GM10248 (cell line): ENCODE measurements at regions of chr9 and their contacts with region 1.

Region 1: GRCh38 chr9:133375724-133376654 is at the starts of genes STKLD1 and SURF4:
- DNase-seq: peak; percentile 100
- CTCF ChIP-seq: no peak

Region 2: DNA sequence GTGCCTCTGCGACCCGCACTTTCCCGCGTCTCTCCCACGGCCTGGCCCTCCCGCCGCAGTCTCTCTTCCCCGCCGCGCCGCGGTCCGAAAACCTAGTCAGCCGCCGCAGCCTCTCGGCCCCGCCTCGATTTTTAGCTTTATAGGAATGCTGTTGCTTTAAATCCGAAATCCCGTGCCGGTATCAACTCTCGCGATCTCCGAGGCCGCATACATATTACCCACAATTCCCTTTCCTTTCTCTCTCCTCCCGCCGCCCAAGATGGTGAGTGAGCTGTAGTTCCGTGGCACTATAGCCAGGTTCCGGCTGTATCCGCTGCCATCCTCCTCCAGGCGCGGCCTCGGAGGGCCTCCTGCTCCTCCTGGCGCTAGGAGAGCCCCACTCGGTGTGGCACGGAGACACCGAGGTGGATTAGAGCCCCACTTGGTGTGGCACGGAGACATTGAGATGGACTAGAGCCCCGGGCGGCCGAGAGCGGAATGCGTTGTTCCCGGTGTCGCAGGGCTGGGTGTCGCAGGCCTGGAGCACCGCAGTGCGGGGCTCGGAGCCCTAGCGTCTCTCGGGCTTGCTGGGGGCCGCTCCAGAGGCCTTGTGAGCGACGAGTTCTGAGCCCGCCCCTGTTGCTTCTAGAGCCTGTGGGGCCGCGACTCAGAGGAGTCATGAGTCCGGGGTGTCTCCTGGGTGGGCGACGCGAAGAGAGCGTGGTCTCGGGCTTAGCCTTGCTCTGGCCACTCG is 27.8 kb before region 1 on chr9 and contains the starts of genes MED22 and RPL7A:
- CTCF ChIA-PET with region 1: interaction called, 10 read pairs
- POLR2A ChIA-PET with region 1: interaction called, 21 read pairs
- DNase-seq: peak; percentile 94
- CTCF ChIP-seq: no peak

Region 3: DNA sequence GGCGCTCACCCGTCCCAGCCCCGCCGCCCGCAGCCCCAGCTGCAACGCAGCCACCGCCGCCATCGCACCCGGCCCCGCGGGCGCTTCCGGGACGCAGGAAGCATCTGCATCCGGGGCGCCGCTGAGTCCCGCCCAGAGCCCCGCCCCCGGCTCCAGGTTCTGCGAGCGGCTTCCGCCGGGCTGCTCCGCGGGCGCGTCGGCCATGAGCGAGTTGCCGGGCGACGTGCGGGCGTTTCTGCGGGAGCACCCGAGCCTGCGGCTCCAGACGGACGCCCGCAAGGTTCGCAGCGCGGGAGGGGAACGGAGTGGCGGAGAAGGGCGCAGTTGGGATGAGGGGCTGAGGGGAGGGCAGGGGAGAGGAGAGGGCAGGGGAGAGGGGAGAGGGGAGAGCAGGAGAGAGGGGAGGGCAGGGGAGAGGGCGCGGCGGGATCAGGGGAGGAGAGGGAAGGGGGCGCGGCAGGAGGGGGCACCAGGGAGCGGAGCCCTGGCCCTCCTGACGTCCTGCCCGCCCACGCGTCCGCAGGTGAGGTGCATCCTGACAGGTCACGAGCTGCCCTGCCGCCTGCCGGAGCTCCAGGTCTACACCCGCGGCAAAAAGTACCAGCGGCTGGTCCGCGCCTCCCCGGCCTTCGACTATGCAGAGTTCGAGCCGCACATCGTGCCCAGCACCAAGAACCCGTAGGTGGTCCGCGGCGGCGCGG is 19.4 kb before region 1 on chr9 and contains the starts of genes SURF1 and SURF2:
- CTCF ChIA-PET with region 1: interaction called, 22 read pairs
- POLR2A ChIA-PET with region 1: interaction called, 21 read pairs
- DNase-seq: peak; percentile 93
- CTCF ChIP-seq: peak; percentile 8

Region 4: DNA sequence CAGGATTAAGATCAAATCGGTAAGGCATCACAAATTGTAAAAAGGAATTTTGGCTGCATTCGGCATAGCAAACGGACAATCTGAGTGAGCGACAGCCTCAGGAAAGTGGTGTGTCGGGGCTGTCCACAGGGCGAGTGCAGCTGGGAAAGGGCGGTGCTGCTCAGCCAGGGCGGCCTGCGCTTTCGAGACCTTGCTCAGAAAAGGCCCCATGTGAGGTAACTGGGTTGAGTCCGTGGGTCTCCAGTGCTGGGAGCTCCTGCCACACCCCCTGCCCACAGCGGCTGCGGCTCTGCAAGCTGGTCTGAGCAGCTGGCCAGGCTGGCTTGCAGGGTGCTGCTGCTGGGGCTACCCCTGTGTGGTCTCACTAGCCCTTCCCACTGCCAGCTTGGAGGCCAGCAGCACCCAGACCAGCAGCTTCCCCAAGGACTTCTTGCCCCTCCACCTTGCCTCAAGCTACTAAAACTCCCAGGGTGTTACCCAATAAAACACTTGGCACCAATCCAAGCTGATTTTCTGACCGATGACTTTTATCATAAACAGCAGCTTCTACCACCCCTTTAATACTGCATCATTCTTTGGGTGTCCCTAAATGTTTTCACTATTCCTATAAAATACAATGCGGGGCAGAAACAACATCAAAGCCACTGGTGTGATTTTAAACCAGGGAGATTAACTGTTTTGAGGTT is 13.5 kb before region 1 on chr9:
- CTCF ChIA-PET with region 1: interaction called, 22 read pairs
- POLR2A ChIA-PET with region 1: interaction called, 18 read pairs
- DNase-seq: no peak
- CTCF ChIP-seq: no peak

Region 5: GRCh38 chr9:133499132-133499891 is 123.3 kb after region 1 on chr9:
- CTCF ChIA-PET with region 1: no interaction called
- POLR2A ChIA-PET with region 1: no interaction called
- DNase-seq: no peak
- CTCF ChIP-seq: no peak